ENCODE measurements at regions of chr3 and their contacts with region 1.

Region 1: DNA sequence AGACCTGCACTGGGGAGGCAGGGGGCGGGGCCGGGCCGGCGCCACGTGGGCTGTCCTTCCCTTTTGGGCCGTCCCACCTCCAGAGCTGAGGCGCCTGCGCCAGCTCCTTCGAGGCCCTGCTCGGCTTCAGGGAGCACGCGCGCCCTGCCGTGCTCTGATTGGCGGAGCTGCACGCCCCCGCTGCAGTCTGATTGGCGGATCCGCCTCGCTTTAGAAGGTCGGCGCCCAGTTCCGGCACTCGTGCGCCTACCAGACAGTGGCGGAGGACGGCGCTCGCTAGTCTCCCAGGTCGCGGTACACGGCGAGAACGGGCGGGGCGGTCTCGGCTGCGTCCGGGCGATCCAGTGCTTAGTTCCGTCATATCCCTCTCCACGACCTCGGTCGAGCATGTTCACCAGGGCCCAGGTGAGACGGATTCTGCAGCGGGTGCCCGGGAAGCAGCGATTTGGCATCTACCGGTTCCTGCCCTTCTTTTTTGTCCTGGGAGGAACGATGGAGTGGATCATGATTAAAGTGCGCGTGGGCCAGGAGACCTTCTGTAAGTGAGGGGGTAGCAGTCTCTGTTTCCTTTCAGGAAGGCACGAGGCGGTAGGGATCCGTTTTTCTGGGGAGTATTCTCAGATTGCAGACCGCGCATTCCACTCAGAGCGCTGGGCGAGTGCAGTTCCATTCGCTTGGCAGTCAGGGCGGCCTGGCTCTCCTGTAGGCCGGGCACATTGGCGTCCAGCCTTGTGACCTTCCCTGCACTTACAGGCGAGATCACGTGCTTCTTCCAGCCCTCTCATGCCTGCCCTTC is at the start of gene UQCC5:
- DNase-seq: peak; percentile 98
- H3K4me3 ChIP-seq: peak within 1 kb of the TSS; percentile 66 to 83
- H3K27ac ChIP-seq: peak within 1 kb of the TSS; percentile 53 to 79
- H3K4me1 ChIP-seq: peaks cover 43% of the 10 kb centered on the region
- H3K27me3 ChIP-seq: no peaks in the 10 kb centered on the region
- CTCF ChIP-seq: no peak
- POLR2A ChIP-seq: peak; percentile 94
- total RNA-seq, gene UQCC5: 23.0 to 30.5 TPM

Region 2: DNA sequence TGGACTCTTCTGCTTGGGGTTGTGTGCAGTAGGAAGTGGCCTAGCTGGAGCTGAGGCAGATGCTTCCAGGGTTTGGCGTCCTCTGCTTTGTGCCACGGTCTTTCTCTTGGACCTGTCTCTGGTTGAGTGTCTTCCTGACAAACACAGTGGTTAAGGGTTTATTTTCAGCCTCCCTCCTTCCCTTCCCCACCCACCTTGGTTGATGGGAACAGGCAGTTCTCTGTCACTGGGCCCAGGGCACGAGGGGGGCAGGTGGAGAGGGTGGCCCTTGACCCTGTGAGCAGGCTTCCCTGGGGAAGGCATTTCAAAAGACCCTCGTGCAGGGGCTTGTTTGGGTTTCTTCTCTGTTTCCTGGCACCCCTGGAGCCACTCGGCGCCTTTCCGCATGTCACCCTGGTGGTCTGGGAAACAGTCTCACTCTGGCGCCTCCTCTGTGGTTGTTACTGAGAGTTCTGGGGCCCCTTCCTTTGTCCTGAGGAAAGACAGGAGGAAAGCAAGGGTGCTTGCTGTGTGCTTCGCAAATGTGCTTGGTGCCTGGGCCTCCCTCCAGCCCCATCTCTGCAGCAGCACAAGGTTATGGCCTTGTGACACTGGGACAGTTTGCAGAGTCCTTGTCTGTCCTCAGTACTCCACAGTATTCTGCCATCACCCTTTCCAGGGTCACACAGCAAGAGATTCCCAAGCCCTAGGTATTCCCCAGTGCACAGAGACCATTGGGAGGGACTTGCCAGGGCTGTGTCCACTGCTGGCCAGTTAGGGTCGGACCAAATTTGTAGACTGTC is 51.7 kb before region 1 on chr3:
- intact Hi-C with region 1: loop called (anchors 5 kb)
- DNase-seq: no peak
- H3K4me3 ChIP-seq: no peak overlapping the region
- H3K27ac ChIP-seq: peak overlapping the region; percentile 80 to 86
- H3K4me1 ChIP-seq: peaks cover 83% of the 10 kb centered on the region
- H3K27me3 ChIP-seq: no peaks in the 10 kb centered on the region
- CTCF ChIP-seq: no peak
- POLR2A ChIP-seq: no peak

Region 3: GRCh38 chr3:52959773-52960172 is 423.2 kb after region 1 on chr3:
- intact Hi-C with region 1: no loop called
- DNase-seq: no peak
- H3K4me3 ChIP-seq: no peak overlapping the region
- H3K27ac ChIP-seq: no peak overlapping the region
- H3K4me1 ChIP-seq: no peaks in the 10 kb centered on the region
- H3K27me3 ChIP-seq: no peaks in the 10 kb centered on the region
- CTCF ChIP-seq: no peak
- POLR2A ChIP-seq: no peak